Tibial artery (tissue), 4 donors: ENCODE measurements at regions of chr20 and their contacts with region 1.

Region 1: GRCh38 chr20:47317127-47317895 is 39.2 kb downstream of the ZMYND8 start:
- DNase-seq: peak; percentile 88 to 94
- H3K4me3 ChIP-seq: peak overlapping the region; percentile 34 to 41
- H3K27ac ChIP-seq: peak overlapping the region; percentile 90 to 95
- H3K4me1 ChIP-seq: peaks cover 4 to 77% (median 67%) of the 10 kb centered on the region in 4 donors
- H3K27me3 ChIP-seq: no peaks in the 10 kb centered on the region
- CTCF ChIP-seq: peak in 1 of 2 experiments; percentile 43

Region 2: DNA sequence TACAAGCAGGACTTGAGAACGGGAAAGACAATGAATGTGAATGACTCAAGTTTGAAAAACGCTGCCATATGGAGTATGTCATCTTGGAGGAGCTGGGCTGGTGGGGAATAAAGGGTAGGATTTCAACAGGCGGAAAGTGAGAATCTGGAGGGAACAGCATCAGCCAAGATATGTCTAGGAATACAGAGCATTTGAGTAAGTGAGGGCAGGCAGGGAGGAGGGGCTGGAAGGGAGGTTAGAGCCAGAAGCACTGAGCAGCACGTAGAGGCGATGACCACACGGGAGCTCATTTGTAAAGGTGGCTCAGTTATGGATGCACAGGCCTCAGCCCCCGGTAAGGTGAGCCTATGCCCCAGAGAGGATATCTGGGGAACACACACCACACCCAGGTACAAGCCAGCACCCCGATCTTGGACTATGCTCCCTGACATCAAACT is 75.9 kb before region 1 on chr20:
- intact Hi-C with region 1: no loop called
- DNase-seq: no peak
- H3K4me3 ChIP-seq: no peak overlapping the region
- H3K27ac ChIP-seq: no peak overlapping the region
- H3K4me1 ChIP-seq: no peaks in the 10 kb centered on the region
- H3K27me3 ChIP-seq: no peaks in the 10 kb centered on the region
- CTCF ChIP-seq: no peak

Region 3: GRCh38 chr20:47256668-47257236 is 60.6 kb before region 1 on chr20:
- intact Hi-C with region 1: no loop called
- DNase-seq: no peak
- H3K4me3 ChIP-seq: no peak overlapping the region
- H3K27ac ChIP-seq: peak overlapping the region; percentile 35 to 66
- H3K4me1 ChIP-seq: peaks cover 0 to 52% (median 43%) of the 10 kb centered on the region in 4 donors
- H3K27me3 ChIP-seq: no peaks in the 10 kb centered on the region
- CTCF ChIP-seq: no peak

Region 4: GRCh38 chr20:47357296-47358035 is 40.2 kb after region 1 on chr20:
- intact Hi-C with region 1: loop called (anchors 2 kb)
- DNase-seq: peak; percentile 74 to 87
- H3K4me3 ChIP-seq: peak overlapping the region in 1 of 2 donors; percentile 12
- H3K27ac ChIP-seq: peak overlapping the region; percentile 84 to 97
- H3K4me1 ChIP-seq: peaks cover 23 to 100% (median 95%) of the 10 kb centered on the region in 4 donors
- H3K27me3 ChIP-seq: no peaks in the 10 kb centered on the region
- CTCF ChIP-seq: no peak

Region 5: GRCh38 chr20:47501483-47502270 is 184.4 kb after region 1 on chr20 and contains the start of gene NCOA3:
- intact Hi-C with region 1: no loop called
- DNase-seq: peak; percentile 93
- H3K4me3 ChIP-seq: peak within 1 kb of the TSS; percentile 96 to 99
- H3K27ac ChIP-seq: peak within 1 kb of the TSS; percentile 97
- H3K4me1 ChIP-seq: peaks cover 0 to 40% (median 13%) of the 10 kb centered on the region in 4 donors
- H3K27me3 ChIP-seq: no peaks in the 10 kb centered on the region
- CTCF ChIP-seq: peak; percentile 58 to 81